ENCODE measurements at regions of chr1 and their contacts with region 1.

Region 1: GRCh38 chr1:53393325-53393792 is 65.5 kb upstream of the LRP8 start:
- DNase-seq: peak; percentile 61 to 76
- ATAC-seq: peak; percentile 87 to 96
- H3K4me3 ChIP-seq: no peak overlapping the region
- H3K27ac ChIP-seq: peak overlapping the region in 1 of 2 experiments; percentile 62; a peak in 2 of 6 replicates
- H3K4me1 ChIP-seq: no peaks in the 10 kb centered on the region
- CTCF ChIP-seq: peak; percentile 74
- EP300 ChIP-seq: no peak
- POLR2A ChIP-seq: no peak
- RAD21 ChIP-seq: peak; percentile 82 to 89

Region 2: DNA sequence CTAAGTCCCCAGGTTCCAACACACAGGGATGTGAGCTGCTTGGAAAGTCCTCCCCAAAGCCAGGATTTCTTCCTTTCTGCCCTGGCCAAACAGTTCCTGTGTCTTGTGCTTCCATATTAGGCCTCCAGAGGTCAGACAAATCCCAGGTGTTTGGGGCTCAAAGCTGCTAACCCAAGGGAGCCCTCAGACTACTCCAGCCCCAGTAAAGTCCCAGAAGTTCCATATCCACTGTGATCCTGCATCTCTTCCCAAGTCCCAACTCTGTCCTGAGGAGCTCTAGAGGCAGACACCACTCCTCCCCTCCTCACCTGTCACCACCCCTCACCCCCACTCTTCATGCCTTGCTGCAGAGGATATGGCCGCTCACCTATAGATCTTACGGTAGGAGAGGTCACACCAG is 127.3 kb before region 1 on chr1:
- CTCF ChIA-PET with region 1: interaction called, 244 read pairs
- POLR2A ChIA-PET with region 1: no interaction called
- DNase-seq: peak in 1 of 2 experiments; percentile 33
- ATAC-seq: peak; percentile 80 to 84; a peak in 5 of 6 replicates
- H3K4me3 ChIP-seq: no peak overlapping the region
- H3K27ac ChIP-seq: no peak overlapping the region
- H3K4me1 ChIP-seq: no peaks in the 10 kb centered on the region
- CTCF ChIP-seq: 0 out of 3 replicates have a peak, but pooled peaks have one; percentile 22
- EP300 ChIP-seq: no peak
- POLR2A ChIP-seq: no peak
- RAD21 ChIP-seq: peak; percentile 33 to 45; a peak in 4 of 5 replicates

Region 3: GRCh38 chr1:53285969-53286760 is 107.2 kb before region 1 on chr1:
- CTCF ChIA-PET with region 1: interaction called, 244 read pairs
- POLR2A ChIA-PET with region 1: no interaction called
- DNase-seq: no peak
- ATAC-seq: no peak
- H3K4me3 ChIP-seq: no peak overlapping the region
- H3K27ac ChIP-seq: no peak overlapping the region
- H3K4me1 ChIP-seq: no peaks in the 10 kb centered on the region
- CTCF ChIP-seq: no peak
- EP300 ChIP-seq: no peak
- POLR2A ChIP-seq: no peak
- RAD21 ChIP-seq: no peak

Region 4: DNA sequence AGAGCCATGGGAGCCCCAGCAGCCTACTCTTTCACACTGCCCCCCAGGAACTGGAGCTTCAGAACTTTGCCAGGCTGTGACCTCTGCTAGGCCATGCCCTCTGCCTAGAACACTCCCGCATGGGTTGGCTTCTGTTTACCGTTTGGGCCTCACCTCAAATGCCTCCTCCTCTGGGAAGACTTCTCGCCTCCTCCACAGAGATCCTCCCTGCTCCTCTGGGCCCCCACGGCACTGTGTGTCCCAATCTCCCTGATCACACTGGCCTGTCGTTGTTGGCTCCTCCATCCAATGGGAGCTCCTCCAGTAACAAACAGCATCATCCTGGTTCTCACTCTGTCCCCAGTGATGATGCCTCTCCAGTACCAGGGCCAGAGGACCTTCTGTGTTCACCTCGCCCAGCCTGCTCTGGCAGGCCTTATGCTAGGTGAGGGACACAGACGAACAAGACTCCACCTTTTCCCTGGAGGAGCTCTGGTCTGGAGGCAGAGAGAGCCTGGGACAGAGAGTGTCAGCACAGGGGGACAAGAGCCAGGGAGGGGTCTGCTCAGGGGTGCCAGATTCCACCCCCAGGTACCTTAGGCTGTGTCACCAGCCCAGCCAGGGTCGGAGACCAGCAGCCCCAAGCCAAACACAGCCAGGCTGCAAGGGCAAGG is 61.4 kb before region 1 on chr1:
- CTCF ChIA-PET with region 1: interaction called, 11 read pairs
- POLR2A ChIA-PET with region 1: no interaction called
- DNase-seq: no peak
- ATAC-seq: no peak
- H3K4me3 ChIP-seq: no peak overlapping the region
- H3K27ac ChIP-seq: no peak overlapping the region
- H3K4me1 ChIP-seq: peaks cover 4% of the 10 kb centered on the region; the same call in 1 of the 3 replicates
- CTCF ChIP-seq: no peak
- EP300 ChIP-seq: no peak
- POLR2A ChIP-seq: no peak
- RAD21 ChIP-seq: no peak

Region 5: GRCh38 chr1:53365437-53366063 is 27.8 kb before region 1 on chr1:
- CTCF ChIA-PET with region 1: no interaction called
- POLR2A ChIA-PET with region 1: no interaction called
- DNase-seq: no peak
- ATAC-seq: no peak
- H3K4me3 ChIP-seq: no peak overlapping the region
- H3K27ac ChIP-seq: no peak overlapping the region
- H3K4me1 ChIP-seq: no peaks in the 10 kb centered on the region
- CTCF ChIP-seq: no peak
- EP300 ChIP-seq: no peak
- POLR2A ChIP-seq: no peak
- RAD21 ChIP-seq: no peak

Region 6: DNA sequence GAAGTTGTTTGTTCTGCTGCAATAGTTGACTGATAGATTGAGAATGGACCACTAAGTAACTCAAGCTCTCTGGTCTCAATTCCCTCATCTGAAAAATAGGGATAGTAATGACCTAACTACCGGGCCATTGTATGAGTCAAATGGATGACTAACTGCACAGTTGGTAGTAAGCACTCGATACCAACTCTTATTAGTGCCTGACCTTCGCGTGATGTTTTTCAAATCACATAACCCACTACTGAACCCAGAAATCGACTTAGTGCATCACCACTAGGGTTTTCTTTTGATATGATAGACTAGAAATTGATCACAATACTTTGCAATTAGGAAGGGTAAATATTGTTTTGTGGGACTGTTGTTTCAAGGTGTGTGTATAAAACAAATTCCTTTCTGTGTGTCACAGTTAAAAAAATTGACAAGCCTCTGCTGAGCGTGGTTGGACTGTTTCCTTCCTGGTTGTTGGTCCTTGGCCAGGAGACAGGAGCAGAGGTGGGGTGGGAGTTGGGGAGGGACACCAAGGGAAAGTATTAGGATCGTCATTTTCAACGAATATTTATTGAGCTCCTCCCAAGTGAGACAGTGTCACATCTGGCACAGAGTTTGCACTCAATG is 11.5 kb before region 1 on chr1:
- CTCF ChIA-PET with region 1: interaction called, 37 read pairs
- POLR2A ChIA-PET with region 1: no interaction called
- DNase-seq: peak; percentile 13 to 43
- ATAC-seq: peak; percentile 55 to 76; a peak in 4 of 6 replicates
- H3K4me3 ChIP-seq: no peak overlapping the region
- H3K27ac ChIP-seq: 0 out of 6 replicates have a peak overlapping the region, but pooled peaks of 1 of the 2 experiments have one; percentile 37
- H3K4me1 ChIP-seq: peaks cover 11% of the 10 kb centered on the region; the same call in 2 of the 3 replicates
- CTCF ChIP-seq: no peak
- EP300 ChIP-seq: no peak
- POLR2A ChIP-seq: no peak
- RAD21 ChIP-seq: no peak

Measured in A549 (cell line).